ENCODE measurements at regions of chr12 and their contacts with region 1.

Region 1: GRCh38 chr12:113334786-113335540 is at the start of gene SLC8B1:
- DNase-seq: peak; percentile 89
- ATAC-seq: peak; percentile 100
- H3K4me3 Mint-ChIP-seq: peak within 1 kb of the TSS; percentile 95
- H3K27ac Mint-ChIP-seq: peak within 1 kb of the TSS; percentile 71
- H3K4me1 Mint-ChIP-seq: peaks cover 35% of the 10 kb centered on the region
- H3K27me3 Mint-ChIP-seq: no peaks in the 10 kb centered on the region
- CTCF ChIP-seq: no peak
- total RNA-seq, gene SLC8B1: 14.3 and 22.4 TPM in 2 replicates

Region 2: DNA sequence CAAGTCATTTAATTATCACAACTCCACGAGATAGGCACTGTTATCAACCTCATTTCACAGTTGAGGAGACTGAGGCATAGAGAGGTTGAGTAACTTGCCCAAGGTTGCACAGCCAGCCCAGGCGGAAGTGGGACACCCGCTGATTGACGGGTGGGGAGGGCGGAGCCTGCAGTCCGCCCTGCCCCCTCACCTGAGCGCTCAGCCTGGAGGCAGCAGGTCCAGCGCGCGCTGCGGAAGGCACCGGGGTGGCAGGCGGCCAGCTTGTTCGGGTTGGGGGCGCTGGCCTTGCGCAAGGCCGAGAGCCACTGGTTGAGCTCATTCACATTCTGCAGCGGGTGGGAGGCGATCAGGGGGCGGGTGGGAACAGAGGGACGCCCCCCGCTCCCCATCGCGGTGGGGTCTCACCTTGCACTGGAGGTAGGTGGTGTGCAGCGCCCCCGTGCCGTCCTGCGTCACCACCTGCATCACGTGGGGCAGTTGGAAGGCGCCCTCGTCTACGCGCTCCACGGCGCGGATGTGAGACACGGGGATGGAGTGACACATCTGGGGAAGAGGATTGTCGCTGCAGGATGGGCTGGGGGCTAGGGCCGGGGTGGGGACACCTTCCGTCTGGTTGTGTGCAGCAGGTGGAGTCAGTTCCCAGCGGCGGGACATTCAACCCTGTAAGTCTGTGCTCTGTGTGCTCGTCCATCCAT is 231.1 kb before region 1 on chr12:
- CTCF ChIA-PET with region 1: no interaction called
- POLR2A ChIA-PET with region 1: interaction called, 10 read pairs
- intact Hi-C with region 1: no loop called
- DNase-seq: no peak
- ATAC-seq: peak; percentile 86
- H3K4me3 Mint-ChIP-seq: peak overlapping the region; percentile 77
- H3K27ac Mint-ChIP-seq: no peak overlapping the region
- H3K4me1 Mint-ChIP-seq: peaks cover 17% of the 10 kb centered on the region
- H3K27me3 Mint-ChIP-seq: no peaks in the 10 kb centered on the region
- CTCF ChIP-seq: no peak

Region 3: GRCh38 chr12:113184900-113185773 is 149.8 kb before region 1 on chr12 and contains the starts of genes DDX54 and RITA1:
- CTCF ChIA-PET with region 1: no interaction called
- POLR2A ChIA-PET with region 1: interaction called, 3 read pairs
- intact Hi-C with region 1: loop called (anchors 1 kb)
- DNase-seq: peak; percentile 87
- ATAC-seq: peak; percentile 83
- H3K4me3 Mint-ChIP-seq: peak within 1 kb of the TSS; percentile 93
- H3K27ac Mint-ChIP-seq: peak within 1 kb of the TSS; percentile 94
- H3K4me1 Mint-ChIP-seq: peaks cover 39% of the 10 kb centered on the region
- H3K27me3 Mint-ChIP-seq: no peaks in the 10 kb centered on the region
- CTCF ChIP-seq: no peak
- total RNA-seq, gene DDX54: 115 TPM in 2 replicates
- total RNA-seq, gene RITA1: 15.5 and 18.2 TPM in 2 replicates

Region 4: DNA sequence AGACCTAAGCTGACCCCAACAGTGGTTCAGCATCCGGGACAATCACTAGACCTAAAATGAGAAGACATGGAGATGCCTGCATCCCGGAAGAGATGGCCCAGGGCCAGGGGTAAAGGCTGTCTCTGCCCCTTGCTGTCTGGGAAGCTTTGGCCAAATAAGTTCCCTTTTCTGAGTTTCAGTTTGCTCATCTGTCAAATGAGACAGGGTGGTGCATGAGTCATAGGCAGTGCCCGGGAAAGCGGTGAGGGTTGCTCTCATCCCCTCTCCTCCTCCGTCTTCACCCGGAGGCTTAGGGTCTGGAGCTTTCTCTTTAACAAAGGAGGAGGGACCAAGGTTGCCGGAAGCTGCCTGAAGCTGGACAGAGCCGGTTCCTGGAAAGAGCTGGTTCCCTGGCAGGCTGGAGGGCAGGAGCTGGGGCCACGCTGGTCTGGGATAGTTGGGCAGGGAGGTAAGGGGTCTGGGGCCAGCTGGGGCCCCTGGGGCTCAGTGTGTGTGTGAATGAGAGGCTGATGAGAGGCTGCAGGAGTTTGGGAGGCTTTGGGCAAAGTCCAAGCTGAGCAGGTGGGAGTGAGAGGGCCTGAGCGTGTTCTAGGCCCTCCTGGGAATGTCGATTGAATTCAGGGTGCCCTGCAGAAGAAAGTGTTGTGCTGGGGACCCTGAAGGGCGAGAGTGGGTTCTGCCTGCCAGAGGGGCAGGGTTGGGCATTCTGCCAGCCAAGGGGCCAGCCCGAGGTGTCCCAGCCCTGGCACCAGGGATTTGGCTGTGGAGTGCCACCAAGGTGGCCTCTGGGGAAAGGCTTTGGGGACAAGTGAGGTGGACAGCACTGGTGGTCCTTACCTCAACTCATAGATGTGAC is 87.3 kb after region 1 on chr12 and contains the start of gene SDSL:
- CTCF ChIA-PET with region 1: no interaction called
- POLR2A ChIA-PET with region 1: interaction called, 3 read pairs
- intact Hi-C with region 1: loop called (anchors 1 kb)
- DNase-seq: peak; percentile 41
- ATAC-seq: peak; percentile 92
- H3K4me3 Mint-ChIP-seq: peak within 1 kb of the TSS; percentile 67
- H3K27ac Mint-ChIP-seq: peak within 1 kb of the TSS; percentile 68
- H3K4me1 Mint-ChIP-seq: peaks cover 25% of the 10 kb centered on the region
- H3K27me3 Mint-ChIP-seq: peaks cover 14% of the 10 kb centered on the region
- CTCF ChIP-seq: no peak
- total RNA-seq, gene SDSL: 0.20 and 1.2 TPM in 2 replicates

Region 5: DNA sequence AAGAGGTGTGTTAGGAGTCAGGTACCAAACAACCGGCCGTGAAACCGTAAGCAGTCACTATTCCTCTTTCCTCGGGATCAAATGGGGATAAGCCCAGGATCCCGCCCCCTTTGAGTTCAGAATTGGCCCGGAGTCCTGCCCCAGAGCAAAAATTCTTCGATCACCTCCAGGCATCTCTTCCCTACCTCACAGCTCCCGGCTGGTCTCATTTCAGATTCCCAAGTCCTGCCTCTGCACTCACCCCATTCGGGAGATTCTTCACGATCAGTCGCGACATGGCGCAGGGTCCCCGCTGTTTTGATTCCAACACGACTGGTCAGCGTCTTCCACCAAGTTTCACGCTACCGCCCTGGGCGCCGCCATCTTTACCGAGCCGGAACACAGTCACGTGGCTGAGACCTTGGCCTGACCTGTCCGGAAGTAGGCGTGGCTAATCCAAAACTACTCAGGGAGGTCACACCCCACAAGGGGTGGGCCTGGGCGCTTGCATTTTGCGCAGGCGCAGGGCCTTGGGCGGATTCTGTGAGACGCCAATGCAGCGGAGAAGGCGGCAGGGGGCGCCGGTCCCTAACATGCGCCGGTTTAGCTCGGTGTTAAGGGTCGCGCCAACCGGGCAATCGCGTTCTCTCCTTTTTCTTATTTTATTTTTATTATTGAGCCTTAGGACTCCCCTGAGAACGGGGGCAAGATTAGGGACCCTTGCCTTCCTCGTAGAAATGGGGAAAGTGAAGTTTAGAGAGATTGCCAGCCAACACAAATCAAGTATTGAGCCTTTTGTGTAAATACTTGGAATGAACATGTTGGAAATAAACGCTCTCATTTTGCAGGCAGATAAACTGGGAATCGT is 631.2 kb after region 1 on chr12 and contains the start of gene RBM19:
- CTCF ChIA-PET with region 1: no interaction called
- POLR2A ChIA-PET with region 1: no interaction called
- intact Hi-C with region 1: loop called (anchors 2 kb)
- DNase-seq: peak; percentile 90
- ATAC-seq: peak; percentile 98
- H3K4me3 Mint-ChIP-seq: peak within 1 kb of the TSS; percentile 100
- H3K27ac Mint-ChIP-seq: peak within 1 kb of the TSS; percentile 95
- H3K4me1 Mint-ChIP-seq: peaks cover 44% of the 10 kb centered on the region
- H3K27me3 Mint-ChIP-seq: peaks cover 6% of the 10 kb centered on the region
- CTCF ChIP-seq: peak; percentile 54
- total RNA-seq, gene RBM19: 77.0 and 79.9 TPM in 2 replicates

Measured in activated B cell treated with CpG ODN at 0.5 μM for 24 hours (primary cell).